GM12878 (cell line): ENCODE measurements at regions of chr2 and their contacts with region 1.

Region 1: GRCh38 chr2:73828818-73829570 is at the start of gene STAMBP:
- DNase-seq: peak; percentile 87
- ATAC-seq: peak; percentile 89
- H3K4me3 ChIP-seq: peak within 1 kb of the TSS; percentile 96
- H3K27ac ChIP-seq: peak within 1 kb of the TSS; percentile 94
- H3K4me1 ChIP-seq: peaks cover 7% of the 10 kb centered on the region; the same call in 1 of the 2 replicates
- H3K27me3 ChIP-seq: no peaks in the 10 kb centered on the region
- CTCF ChIP-seq: no peak
- EP300 ChIP-seq: no peak
- POLR2A ChIP-seq: peak; percentile 80
- RAD21 ChIP-seq: no peak
- polyA plus RNA-seq, gene STAMBP: 67.3 to 72.2 TPM

Region 2: GRCh38 chr2:73839652-73840411 is 10.8 kb after region 1 on chr2:
- CTCF ChIA-PET with region 1: interaction called, 36 read pairs
- POLR2A ChIA-PET with region 1: no interaction called
- RAD21 ChIA-PET with region 1: interaction called, 4 read pairs
- SMC1A ChIA-PET with region 1: interaction called, 14 read pairs
- in situ Hi-C with region 1: no loop called
- intact Hi-C with region 1: no loop called
- DNase-seq: no peak
- ATAC-seq: no peak
- H3K4me3 ChIP-seq: no peak overlapping the region
- H3K27ac ChIP-seq: no peak overlapping the region
- H3K4me1 ChIP-seq: no peaks in the 10 kb centered on the region
- H3K27me3 ChIP-seq: no peaks in the 10 kb centered on the region
- CTCF ChIP-seq: no peak; a peak in 1 of 6 replicates
- EP300 ChIP-seq: no peak
- POLR2A ChIP-seq: no peak
- RAD21 ChIP-seq: no peak

Region 3: GRCh38 chr2:74002487-74003391 is 173.7 kb after region 1 on chr2:
- CTCF ChIA-PET with region 1: interaction called, 11 read pairs
- POLR2A ChIA-PET with region 1: interaction called, 12 read pairs
- RAD21 ChIA-PET with region 1: interaction called, 22 read pairs
- SMC1A ChIA-PET with region 1: interaction called, 5 read pairs
- in situ Hi-C with region 1: no loop called
- intact Hi-C with region 1: no loop called
- DNase-seq: no peak
- ATAC-seq: peak; percentile 96
- H3K4me3 ChIP-seq: peak overlapping the region; percentile 71
- H3K27ac ChIP-seq: peak overlapping the region; percentile 45; the same call in 1 of the 2 replicates
- H3K4me1 ChIP-seq: peaks cover 17% of the 10 kb centered on the region
- H3K27me3 ChIP-seq: no peaks in the 10 kb centered on the region
- CTCF ChIP-seq: no peak
- EP300 ChIP-seq: no peak
- POLR2A ChIP-seq: peak; percentile 63
- RAD21 ChIP-seq: no peak

Region 4: DNA sequence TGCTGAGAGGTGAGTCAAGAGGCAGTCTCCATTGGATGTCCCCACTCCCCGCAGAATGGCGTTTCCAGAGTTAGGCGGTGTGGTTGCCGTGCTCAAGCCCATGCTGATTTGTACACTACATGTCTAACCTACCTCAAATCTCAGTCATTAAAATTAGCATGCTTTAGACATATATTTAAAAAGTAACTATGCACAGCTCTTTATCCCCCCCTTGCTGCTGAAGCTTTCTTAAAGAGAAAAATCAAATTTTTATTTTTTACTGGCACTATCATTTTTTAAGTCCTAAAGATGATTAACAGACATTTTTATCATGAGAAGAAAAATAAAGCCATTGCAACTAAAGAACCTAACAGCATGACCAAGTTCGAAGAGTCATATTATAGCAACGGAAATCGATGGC is 275.8 kb after region 1 on chr2:
- CTCF ChIA-PET with region 1: interaction called, 6 read pairs
- POLR2A ChIA-PET with region 1: no interaction called
- RAD21 ChIA-PET with region 1: interaction called, 7 read pairs
- SMC1A ChIA-PET with region 1: interaction called, 17 read pairs
- in situ Hi-C with region 1: no loop called
- intact Hi-C with region 1: no loop called
- DNase-seq: no peak
- ATAC-seq: no peak
- H3K4me3 ChIP-seq: no peak overlapping the region
- H3K27ac ChIP-seq: no peak overlapping the region
- H3K4me1 ChIP-seq: no peaks in the 10 kb centered on the region
- H3K27me3 ChIP-seq: no peaks in the 10 kb centered on the region
- CTCF ChIP-seq: no peak; a peak in 1 of 6 replicates
- EP300 ChIP-seq: no peak
- POLR2A ChIP-seq: no peak
- RAD21 ChIP-seq: peak; percentile 25; the same call in 1 of the 2 replicates

Region 5: GRCh38 chr2:74238879-74239278 is 409.9 kb after region 1 on chr2:
- CTCF ChIA-PET with region 1: interaction called, 3 read pairs
- POLR2A ChIA-PET with region 1: no interaction called
- RAD21 ChIA-PET with region 1: no interaction called
- SMC1A ChIA-PET with region 1: interaction called, 3 read pairs
- in situ Hi-C with region 1: no loop called
- intact Hi-C with region 1: loop called (anchors 10 kb)
- DNase-seq: no peak
- ATAC-seq: no peak
- H3K4me3 ChIP-seq: no peak overlapping the region
- H3K27ac ChIP-seq: no peak overlapping the region
- H3K4me1 ChIP-seq: no peaks in the 10 kb centered on the region
- H3K27me3 ChIP-seq: no peaks in the 10 kb centered on the region
- CTCF ChIP-seq: no peak
- EP300 ChIP-seq: no peak
- POLR2A ChIP-seq: no peak
- RAD21 ChIP-seq: no peak

Region 6: DNA sequence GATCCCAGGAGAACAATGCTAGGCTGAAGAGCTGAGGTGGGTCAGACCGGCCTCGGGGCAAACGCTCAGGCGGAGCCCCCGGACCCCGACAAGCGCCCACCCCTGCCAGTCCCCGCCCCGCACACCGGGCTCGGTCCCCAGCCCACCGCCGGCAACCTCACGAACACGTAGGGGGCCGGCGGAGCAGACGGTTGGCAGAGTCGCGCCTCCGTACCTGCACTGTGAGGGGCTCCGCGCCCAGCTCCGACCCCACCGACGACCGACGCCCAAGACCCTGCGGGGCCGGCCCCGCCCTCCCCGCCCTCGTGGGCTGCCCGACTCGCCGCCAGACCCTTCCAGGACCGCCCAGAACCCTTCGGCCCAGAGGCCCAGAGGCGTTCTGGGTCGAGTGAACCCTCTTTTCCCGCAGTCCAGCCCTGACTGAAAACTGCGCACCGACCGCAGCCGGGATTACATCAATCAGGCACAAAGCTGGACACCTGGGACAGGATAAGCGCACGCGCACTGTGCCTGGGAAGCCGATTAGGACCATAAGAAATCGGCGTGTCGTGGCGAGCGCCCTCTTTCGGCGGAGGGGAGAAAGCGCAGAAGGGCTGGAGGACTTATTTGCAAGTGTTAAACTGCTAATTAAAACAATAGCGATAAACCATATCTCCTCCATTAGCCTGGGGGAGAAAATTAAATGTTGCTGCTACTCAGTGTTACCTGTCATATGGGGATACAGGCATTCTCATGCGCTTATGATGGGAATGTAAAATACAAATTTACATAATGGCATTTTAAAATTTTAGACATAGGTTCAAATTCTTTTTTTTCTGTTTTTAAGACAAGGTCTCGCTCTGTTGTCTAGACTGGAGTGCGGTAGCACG is 562.8 kb after region 1 on chr2:
- CTCF ChIA-PET with region 1: interaction called, 14 read pairs
- POLR2A ChIA-PET with region 1: no interaction called
- RAD21 ChIA-PET with region 1: interaction called, 3 read pairs
- SMC1A ChIA-PET with region 1: interaction called, 3 read pairs
- in situ Hi-C with region 1: loop called (anchors 10 kb)
- intact Hi-C with region 1: no loop called
- DNase-seq: peak; percentile 76
- ATAC-seq: peak; percentile 89
- H3K4me3 ChIP-seq: peak overlapping the region; percentile 88
- H3K27ac ChIP-seq: peak overlapping the region; percentile 98
- H3K4me1 ChIP-seq: peaks cover 3% of the 10 kb centered on the region; the same call in 1 of the 2 replicates
- H3K27me3 ChIP-seq: no peaks in the 10 kb centered on the region
- CTCF ChIP-seq: peak; percentile 97 to 99 (median 98); a peak in 5 of 6 replicates
- EP300 ChIP-seq: no peak
- POLR2A ChIP-seq: peak; percentile 83
- RAD21 ChIP-seq: peak; percentile 59